T-cell (primary cell): ENCODE measurements at regions of chr6 and their contacts with region 1.

Region 1: DNA sequence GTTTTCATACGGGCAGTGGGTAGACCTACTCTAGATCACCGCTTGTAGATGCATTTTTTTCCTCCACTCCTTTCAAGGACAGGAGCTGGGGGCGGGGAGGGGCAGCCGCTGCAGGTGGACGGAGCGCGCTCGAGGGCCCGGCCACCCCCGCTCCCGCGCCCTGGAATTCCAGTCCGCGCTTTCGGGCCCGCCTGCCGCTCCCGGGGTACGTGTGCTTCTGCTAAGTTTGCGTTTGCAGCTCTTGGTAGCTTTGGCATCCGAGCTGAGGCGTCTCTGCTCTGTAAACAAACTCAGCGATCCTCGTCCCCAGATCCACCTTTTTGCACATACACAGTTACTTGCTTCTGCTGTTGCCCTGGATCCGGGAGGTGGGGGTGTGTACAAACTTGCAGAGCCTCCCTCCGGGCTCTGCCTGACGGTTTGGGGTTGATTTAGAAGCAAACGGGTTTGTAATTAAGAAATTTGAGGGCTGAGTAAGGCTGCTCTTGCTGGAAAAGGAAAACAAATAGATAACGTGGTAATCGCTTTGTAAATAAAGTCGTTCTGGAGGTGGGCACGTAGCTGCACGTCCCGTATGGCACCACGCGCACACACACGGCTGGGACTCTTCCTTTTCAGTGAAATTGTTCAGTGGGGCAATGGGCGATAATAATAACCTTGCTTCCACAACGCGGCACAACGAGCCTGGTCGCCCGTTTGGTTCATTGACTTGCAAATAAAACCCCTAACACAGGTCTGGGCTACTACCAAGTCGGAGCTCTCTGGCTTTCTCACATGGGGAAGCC is 976 bp upstream of the CITED2 start:
- DNase-seq: peak; percentile 76 to 91 (median 83)
- ATAC-seq: peak; percentile 65 to 71 (median 67)
- H3K4me3 ChIP-seq: peak overlapping the region; percentile 94 to 99
- H3K4me3 Mint-ChIP-seq: peak overlapping the region; percentile 96 to 100 (median 99)
- H3K27ac ChIP-seq: peak overlapping the region; percentile 93
- H3K27ac Mint-ChIP-seq: peak overlapping the region; percentile 98 to 100
- H3K4me1 ChIP-seq: peaks cover 13% of the 10 kb centered on the region in 2 experiments
- H3K4me1 Mint-ChIP-seq: peaks cover 27 to 47% (median 29%) of the 10 kb centered on the region in 3 donors
- H3K27me3 ChIP-seq: no peaks in the 10 kb centered on the region
- H3K27me3 Mint-ChIP-seq: no peaks in the 10 kb centered on the region

Region 2: DNA sequence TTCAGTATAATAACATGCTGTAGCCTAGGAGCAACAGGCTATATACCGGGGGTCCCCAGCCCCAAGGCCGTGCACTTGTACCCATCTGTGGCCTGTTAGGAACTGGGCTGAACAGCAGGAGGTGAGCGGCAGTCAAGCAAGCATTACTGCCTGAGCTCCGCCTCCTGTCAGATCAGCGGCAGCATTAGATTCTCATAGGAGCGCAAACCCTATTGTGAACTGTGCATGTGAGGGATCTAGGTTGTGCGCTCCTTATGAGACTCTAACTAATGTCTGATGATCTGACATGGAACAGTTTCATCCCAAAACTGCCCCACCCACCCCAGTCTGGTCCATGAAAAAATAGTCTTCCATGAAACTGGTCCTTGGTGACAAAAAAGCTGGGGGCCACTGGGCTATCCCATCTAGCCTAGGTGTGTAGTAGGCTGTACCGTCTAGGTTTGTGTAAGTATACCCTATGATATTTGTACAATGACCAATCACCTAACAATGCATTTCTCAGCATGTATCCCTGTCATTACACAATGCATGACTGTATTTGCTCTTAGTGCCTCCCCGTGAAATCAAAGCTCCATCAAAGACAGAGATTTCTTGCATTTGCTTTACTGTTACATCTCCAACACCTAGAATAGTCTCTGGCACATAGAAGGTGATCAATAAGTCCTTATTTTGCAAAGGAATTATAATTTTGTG is 907.0 kb before region 1 on chr6:
- CTCF ChIA-PET with region 1: no interaction called
- POLR2A ChIA-PET with region 1: no interaction called
- DNase-seq: no peak
- ATAC-seq: no peak
- H3K4me3 ChIP-seq: no peak overlapping the region
- H3K4me3 Mint-ChIP-seq: no peak overlapping the region
- H3K27ac ChIP-seq: no peak overlapping the region
- H3K27ac Mint-ChIP-seq: no peak overlapping the region
- H3K4me1 ChIP-seq: no peaks in the 10 kb centered on the region
- H3K4me1 Mint-ChIP-seq: no peaks in the 10 kb centered on the region
- H3K27me3 ChIP-seq: peaks cover 0 to 3% of the 10 kb centered on the region in 2 experiments
- H3K27me3 Mint-ChIP-seq: peaks cover 0 to 7% of the 10 kb centered on the region in 2 donors

Region 3: GRCh38 chr6:138970856-138971425 is 404.5 kb before region 1 on chr6:
- CTCF ChIA-PET with region 1: no interaction called
- POLR2A ChIA-PET with region 1: no interaction called
- DNase-seq: peak in 1 of 35 experiments; percentile 27
- ATAC-seq: peak in 2 of 4 experiments; percentile 34 to 63
- H3K4me3 ChIP-seq: no peak overlapping the region
- H3K4me3 Mint-ChIP-seq: peak overlapping the region in 1 of 3 donors; percentile 0
- H3K27ac ChIP-seq: no peak overlapping the region
- H3K27ac Mint-ChIP-seq: no peak overlapping the region
- H3K4me1 ChIP-seq: peaks cover 8 to 14% of the 10 kb centered on the region in 2 experiments
- H3K4me1 Mint-ChIP-seq: peaks cover 76 to 90% (median 88%) of the 10 kb centered on the region in 3 donors
- H3K27me3 ChIP-seq: no peaks in the 10 kb centered on the region
- H3K27me3 Mint-ChIP-seq: no peaks in the 10 kb centered on the region

Region 4: DNA sequence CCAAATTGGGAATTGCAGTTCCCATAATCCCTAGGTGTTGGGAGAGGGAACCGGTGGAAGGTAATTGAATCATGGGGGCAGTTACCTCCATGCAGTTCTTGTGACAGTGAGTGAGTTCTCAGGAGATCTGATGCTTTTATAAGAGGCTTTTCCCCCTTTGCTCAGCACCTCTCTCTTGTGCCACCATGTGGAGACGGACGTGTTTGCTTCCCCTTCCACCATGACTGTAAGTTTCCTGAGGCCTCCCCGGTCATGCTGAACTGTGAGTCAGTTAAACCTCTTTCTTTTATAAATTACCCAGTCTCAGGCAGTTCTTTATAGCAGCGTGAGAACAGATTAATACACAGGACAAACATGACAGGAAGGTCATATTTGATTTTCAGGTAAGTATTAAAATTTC is 265.9 kb before region 1 on chr6:
- CTCF ChIA-PET with region 1: interaction called in 1 of 2 experiments, 6 read pairs
- POLR2A ChIA-PET with region 1: interaction called, 3 to 16 read pairs
- DNase-seq: peak in 12 of 35 experiments; percentile 8 to 40 (median 25)
- ATAC-seq: no peak
- H3K4me3 ChIP-seq: no peak overlapping the region
- H3K4me3 Mint-ChIP-seq: no peak overlapping the region
- H3K27ac ChIP-seq: no peak overlapping the region
- H3K27ac Mint-ChIP-seq: peak overlapping the region; percentile 41 to 96
- H3K4me1 ChIP-seq: peaks cover 30 to 31% of the 10 kb centered on the region in 2 experiments
- H3K4me1 Mint-ChIP-seq: peaks cover 54 to 56% (median 56%) of the 10 kb centered on the region in 3 donors
- H3K27me3 ChIP-seq: no peaks in the 10 kb centered on the region
- H3K27me3 Mint-ChIP-seq: no peaks in the 10 kb centered on the region

Region 5: GRCh38 chr6:139134817-139135581 is 240.4 kb before region 1 on chr6 and contains the start of gene HECA:
- CTCF ChIA-PET with region 1: interaction called, 3 to 16 read pairs
- POLR2A ChIA-PET with region 1: interaction called, 7 to 17 read pairs
- DNase-seq: peak; percentile 96 to 100 (median 99)
- ATAC-seq: peak; percentile 80 to 86 (median 84)
- H3K4me3 ChIP-seq: peak within 1 kb of the TSS; percentile 80 to 91
- H3K4me3 Mint-ChIP-seq: peak within 1 kb of the TSS; percentile 83 to 98 (median 87)
- H3K27ac ChIP-seq: peak within 1 kb of the TSS; percentile 93
- H3K27ac Mint-ChIP-seq: peak within 1 kb of the TSS; percentile 97 to 99
- H3K4me1 ChIP-seq: peaks cover 23 to 24% of the 10 kb centered on the region in 2 experiments
- H3K4me1 Mint-ChIP-seq: peaks cover 53 to 76% (median 68%) of the 10 kb centered on the region in 3 donors
- H3K27me3 ChIP-seq: no peaks in the 10 kb centered on the region
- H3K27me3 Mint-ChIP-seq: no peaks in the 10 kb centered on the region
- total RNA-seq, gene HECA: 125 to 137 (median 131) TPM

Region 6: GRCh38 chr6:139291813-139292619 is 83.4 kb before region 1 on chr6 and contains the start of gene TXLNB:
- CTCF ChIA-PET with region 1: interaction called, 4 to 14 read pairs
- POLR2A ChIA-PET with region 1: interaction called, 3 to 12 read pairs
- DNase-seq: peak; percentile 51 to 91 (median 79)
- ATAC-seq: peak; percentile 87 to 97 (median 94)
- H3K4me3 ChIP-seq: peak within 1 kb of the TSS in 1 of 2 donors; percentile 44
- H3K4me3 Mint-ChIP-seq: peak within 1 kb of the TSS; percentile 67 to 78 (median 77)
- H3K27ac ChIP-seq: peak within 1 kb of the TSS; percentile 95
- H3K27ac Mint-ChIP-seq: peak within 1 kb of the TSS; percentile 97 to 98
- H3K4me1 ChIP-seq: peaks cover 30 to 34% of the 10 kb centered on the region in 2 experiments
- H3K4me1 Mint-ChIP-seq: peaks cover 63 to 78% (median 74%) of the 10 kb centered on the region in 3 donors
- H3K27me3 ChIP-seq: no peaks in the 10 kb centered on the region
- H3K27me3 Mint-ChIP-seq: no peaks in the 10 kb centered on the region
- total RNA-seq, gene TXLNB: 0.41 to 0.92 (median 0.72) TPM

Region 7: GRCh38 chr6:139364302-139364981 is 11.0 kb before region 1 on chr6:
- CTCF ChIA-PET with region 1: interaction called in 1 of 2 experiments, 15 read pairs
- POLR2A ChIA-PET with region 1: interaction called, 7 to 9 read pairs
- DNase-seq: peak in 2 of 35 experiments; percentile 18 to 73
- ATAC-seq: peak; percentile 33 to 62 (median 53)
- H3K4me3 ChIP-seq: no peak overlapping the region
- H3K4me3 Mint-ChIP-seq: no peak overlapping the region
- H3K27ac ChIP-seq: no peak overlapping the region
- H3K27ac Mint-ChIP-seq: peak overlapping the region in 1 of 2 donors; percentile 58
- H3K4me1 ChIP-seq: peaks cover 0 to 19% of the 10 kb centered on the region in 2 experiments
- H3K4me1 Mint-ChIP-seq: peaks cover 35 to 53% (median 48%) of the 10 kb centered on the region in 3 donors
- H3K27me3 ChIP-seq: no peaks in the 10 kb centered on the region
- H3K27me3 Mint-ChIP-seq: no peaks in the 10 kb centered on the region

Region 8: GRCh38 chr6:139540276-139540675 is 164.9 kb after region 1 on chr6:
- CTCF ChIA-PET with region 1: no interaction called
- POLR2A ChIA-PET with region 1: interaction called, 3 to 11 read pairs
- DNase-seq: peak in 34 of 35 experiments; percentile 15 to 65 (median 34)
- ATAC-seq: peak; percentile 82 to 96 (median 88)
- H3K4me3 ChIP-seq: no peak overlapping the region
- H3K4me3 Mint-ChIP-seq: peak overlapping the region in 2 of 3 donors; percentile 25 to 32
- H3K27ac ChIP-seq: peak overlapping the region; percentile 65
- H3K27ac Mint-ChIP-seq: peak overlapping the region; percentile 90
- H3K4me1 ChIP-seq: peaks cover 14 to 31% of the 10 kb centered on the region in 2 experiments
- H3K4me1 Mint-ChIP-seq: peaks cover 22 to 64% (median 42%) of the 10 kb centered on the region in 3 donors
- H3K27me3 ChIP-seq: no peaks in the 10 kb centered on the region
- H3K27me3 Mint-ChIP-seq: no peaks in the 10 kb centered on the region